ENCODE measurements at regions of chr1 and their contacts with region 1.

Region 1: DNA sequence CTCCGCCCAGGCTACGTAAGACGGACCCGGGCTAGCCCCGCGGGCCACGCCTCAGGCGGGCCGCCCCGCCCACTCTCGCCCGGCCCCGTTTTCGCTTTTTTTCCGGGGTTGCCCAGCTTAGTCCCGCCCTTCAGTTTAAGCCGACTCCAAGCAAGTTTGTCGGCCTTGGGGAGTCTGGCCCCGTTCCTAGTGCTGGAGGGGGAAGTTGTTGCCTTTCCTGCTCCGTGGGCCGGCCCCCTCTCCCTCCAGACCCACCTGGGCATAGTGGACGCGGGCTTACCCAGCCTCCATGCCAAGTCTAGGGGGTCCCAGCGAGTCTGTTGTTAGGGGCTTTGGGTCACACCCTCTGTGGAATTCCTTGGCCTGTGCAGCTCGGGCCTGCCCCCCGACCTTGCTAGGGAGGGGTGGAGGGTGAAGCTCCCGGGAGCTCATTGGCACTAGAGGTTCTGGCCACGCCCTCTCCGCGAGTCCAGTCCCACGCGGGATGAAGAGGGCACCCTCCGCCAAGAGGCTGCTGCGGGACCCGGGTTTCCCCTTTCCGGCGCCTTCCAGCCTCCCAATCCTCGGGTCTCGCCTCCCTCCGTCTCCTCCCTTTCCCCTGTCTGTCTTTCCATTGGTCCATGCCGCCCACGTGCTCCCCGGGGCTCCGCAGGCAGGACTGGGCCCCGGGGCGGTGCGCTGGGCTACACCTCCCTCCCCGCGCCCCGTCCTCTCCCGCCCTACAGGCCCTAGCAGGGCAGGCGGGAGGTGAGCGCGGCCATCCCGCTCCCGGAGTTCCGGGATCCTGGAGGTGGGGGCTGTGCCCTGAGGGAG is 3.3 kb downstream of the RUSC1 start:
- DNase-seq: peak; percentile 77 to 93
- H3K4me3 ChIP-seq: peak overlapping the region; percentile 82 to 95 (median 90)
- H3K27ac ChIP-seq: peak overlapping the region; percentile 67; the same call in 1 of the 2 replicates
- H3K4me1 ChIP-seq: peaks cover 8 to 26% (median 14%) of the 10 kb centered on the region in 4 experiments; a peak in 6 of 7 replicates
- H3K27me3 ChIP-seq: peaks cover 0 to 5% (median 3%) of the 10 kb centered on the region in 4 experiments; a peak in 4 of 7 replicates
- CTCF ChIP-seq: no peak
- EP300 ChIP-seq: no peak
- POLR2A ChIP-seq: peak in 1 of 2 experiments; percentile 26; a peak in 2 of 3 replicates
- RAD21 ChIP-seq: no peak

Region 2: GRCh38 chr1:155244368-155245162 is 79.4 kb before region 1 on chr1:
- CTCF ChIA-PET with region 1: interaction called, 227 read pairs
- POLR2A ChIA-PET with region 1: interaction called, 11 read pairs
- DNase-seq: peak; percentile 96 to 97
- H3K4me3 ChIP-seq: peak overlapping the region; percentile 50 to 58 (median 56)
- H3K27ac ChIP-seq: peak overlapping the region; percentile 79
- H3K4me1 ChIP-seq: peaks cover 0 to 4% (median 1%) of the 10 kb centered on the region in 4 experiments; a peak in 2 of 7 replicates
- H3K27me3 ChIP-seq: peaks cover 0 to 14% (median 4%) of the 10 kb centered on the region in 4 experiments; a peak in 2 of 7 replicates
- CTCF ChIP-seq: peak in 2 of 3 experiments; percentile 20 to 21; a peak in 2 of 4 replicates
- EP300 ChIP-seq: peak in 1 of 2 experiments; percentile 76; a peak in 1 of 3 replicates
- POLR2A ChIP-seq: peak; percentile 79 to 96
- RAD21 ChIP-seq: peak in 1 of 2 experiments; percentile 24; a peak in 2 of 4 replicates

Region 3: DNA sequence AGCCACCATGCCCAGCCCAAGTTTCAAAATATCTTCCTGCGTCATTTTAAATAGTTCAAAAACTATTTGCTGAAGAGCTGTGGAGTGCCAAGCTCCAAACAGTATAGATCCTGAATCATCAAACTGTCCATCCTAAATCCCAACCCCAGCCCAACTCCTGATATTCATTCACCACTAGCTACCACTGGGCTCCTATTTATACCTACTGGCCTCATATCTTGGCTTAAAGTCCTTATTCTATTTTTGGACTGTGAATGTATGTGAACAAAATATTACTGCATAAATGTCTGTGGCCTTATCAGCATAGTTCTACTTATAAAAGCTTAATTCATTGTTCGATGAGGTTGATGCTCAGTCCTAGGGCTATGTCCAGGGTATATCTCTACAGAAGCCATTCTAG is 56.6 kb before region 1 on chr1:
- CTCF ChIA-PET with region 1: interaction called, 13 read pairs
- POLR2A ChIA-PET with region 1: interaction called, 21 read pairs
- DNase-seq: no peak
- H3K4me3 ChIP-seq: no peak overlapping the region
- H3K27ac ChIP-seq: no peak overlapping the region
- H3K4me1 ChIP-seq: peaks cover 0 to 5% (median under 1%) of the 10 kb centered on the region in 4 experiments; a peak in 2 of 7 replicates
- H3K27me3 ChIP-seq: no peaks in the 10 kb centered on the region
- CTCF ChIP-seq: no peak
- EP300 ChIP-seq: no peak
- POLR2A ChIP-seq: no peak
- RAD21 ChIP-seq: no peak

Region 4: DNA sequence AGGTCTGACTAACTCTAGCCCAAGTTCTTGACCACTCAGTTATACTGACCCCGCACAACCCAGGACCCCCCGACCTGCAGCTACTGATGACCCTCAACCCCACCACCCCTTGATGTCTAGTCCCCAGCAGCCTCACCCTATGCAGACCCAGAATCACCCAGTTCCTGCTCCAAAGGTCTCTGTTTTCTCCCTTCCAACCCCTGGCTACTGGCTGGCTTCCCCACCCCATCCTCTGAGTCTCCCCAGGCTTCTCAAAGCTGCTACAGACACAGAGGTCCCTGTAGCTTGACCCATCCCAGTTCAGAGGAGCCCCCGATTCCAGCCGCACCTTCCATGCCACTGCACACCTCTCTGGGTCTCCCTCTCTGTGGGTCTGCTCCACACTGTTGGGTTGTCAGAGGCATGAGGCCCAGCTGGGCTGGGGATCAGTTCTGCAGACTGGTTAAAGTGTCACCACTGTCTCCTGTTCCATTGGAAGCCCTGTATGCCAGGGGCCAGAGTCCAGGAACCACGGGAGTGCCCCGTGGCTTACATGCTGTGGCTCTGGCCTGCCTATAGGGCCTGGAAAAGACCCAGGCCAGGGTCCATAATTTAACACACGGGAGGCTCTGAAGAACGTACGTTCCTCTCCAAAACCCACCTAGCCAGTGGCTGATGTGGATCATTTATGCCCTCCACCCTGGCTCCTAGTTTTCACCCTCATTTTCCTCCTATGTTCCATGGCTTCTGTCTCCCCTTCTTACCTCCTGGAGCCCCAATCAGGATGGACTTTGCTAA is 23.3 kb before region 1 on chr1:
- CTCF ChIA-PET with region 1: interaction called, 33 read pairs
- POLR2A ChIA-PET with region 1: interaction called, 4 read pairs
- DNase-seq: no peak
- H3K4me3 ChIP-seq: no peak overlapping the region
- H3K27ac ChIP-seq: no peak overlapping the region
- H3K4me1 ChIP-seq: peaks cover 3 to 13% (median 3%) of the 10 kb centered on the region in 4 experiments; a peak in 6 of 7 replicates
- H3K27me3 ChIP-seq: no peaks in the 10 kb centered on the region; a peak in 2 of 7 replicates
- CTCF ChIP-seq: no peak
- EP300 ChIP-seq: no peak
- POLR2A ChIP-seq: no peak
- RAD21 ChIP-seq: no peak

Region 5: DNA sequence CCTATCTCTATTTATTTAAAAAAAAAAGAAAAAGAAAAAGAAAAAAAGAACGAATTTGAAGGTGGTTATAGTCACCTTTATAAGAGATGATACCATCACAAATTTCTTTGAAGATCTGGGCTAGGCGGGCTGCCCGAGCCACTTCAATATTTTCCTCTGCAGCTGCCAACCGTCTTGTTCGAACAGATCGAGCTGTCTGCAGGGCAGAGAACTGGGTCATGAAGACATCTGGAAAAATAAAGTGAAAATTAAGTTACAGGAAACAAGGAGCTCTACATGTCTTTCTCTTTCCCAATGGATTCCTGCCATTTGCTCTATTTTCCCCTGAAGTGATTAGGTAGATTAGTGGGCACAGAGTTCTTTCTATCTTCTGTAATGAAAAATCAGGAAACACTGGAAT is 28.6 kb after region 1 on chr1:
- CTCF ChIA-PET with region 1: no interaction called
- POLR2A ChIA-PET with region 1: no interaction called
- DNase-seq: no peak
- H3K4me3 ChIP-seq: no peak overlapping the region
- H3K27ac ChIP-seq: no peak overlapping the region
- H3K4me1 ChIP-seq: no peaks in the 10 kb centered on the region
- H3K27me3 ChIP-seq: no peaks in the 10 kb centered on the region
- CTCF ChIP-seq: no peak
- EP300 ChIP-seq: no peak
- POLR2A ChIP-seq: no peak
- RAD21 ChIP-seq: no peak

Region 6: GRCh38 chr1:155410931-155411330 is 86.9 kb after region 1 on chr1:
- CTCF ChIA-PET with region 1: no interaction called
- POLR2A ChIA-PET with region 1: no interaction called
- DNase-seq: no peak
- H3K4me3 ChIP-seq: no peak overlapping the region
- H3K27ac ChIP-seq: no peak overlapping the region
- H3K4me1 ChIP-seq: no peaks in the 10 kb centered on the region
- H3K27me3 ChIP-seq: no peaks in the 10 kb centered on the region
- CTCF ChIP-seq: no peak
- EP300 ChIP-seq: no peak
- POLR2A ChIP-seq: no peak
- RAD21 ChIP-seq: no peak

Region 7: GRCh38 chr1:155466996-155467395 is 143.0 kb after region 1 on chr1:
- CTCF ChIA-PET with region 1: no interaction called
- POLR2A ChIA-PET with region 1: no interaction called
- DNase-seq: no peak
- H3K4me3 ChIP-seq: no peak overlapping the region
- H3K27ac ChIP-seq: no peak overlapping the region
- H3K4me1 ChIP-seq: no peaks in the 10 kb centered on the region
- H3K27me3 ChIP-seq: no peaks in the 10 kb centered on the region
- CTCF ChIP-seq: no peak
- EP300 ChIP-seq: no peak
- POLR2A ChIP-seq: no peak
- RAD21 ChIP-seq: no peak

Measured in H1 (cell line).